ENCODE measurements at regions of chr15 and their contacts with region 1.

Region 1: GRCh38 chr15:59492389-59493377 is 54.7 kb downstream of the FAM81A start:
- DNase-seq: peak; percentile 67
- ATAC-seq: peak; percentile 80
- H3K4me3 Mint-ChIP-seq: no peak overlapping the region
- H3K27ac Mint-ChIP-seq: no peak overlapping the region
- H3K4me1 Mint-ChIP-seq: no peaks in the 10 kb centered on the region
- H3K27me3 Mint-ChIP-seq: no peaks in the 10 kb centered on the region
- CTCF ChIP-seq: peak; percentile 84

Region 2: DNA sequence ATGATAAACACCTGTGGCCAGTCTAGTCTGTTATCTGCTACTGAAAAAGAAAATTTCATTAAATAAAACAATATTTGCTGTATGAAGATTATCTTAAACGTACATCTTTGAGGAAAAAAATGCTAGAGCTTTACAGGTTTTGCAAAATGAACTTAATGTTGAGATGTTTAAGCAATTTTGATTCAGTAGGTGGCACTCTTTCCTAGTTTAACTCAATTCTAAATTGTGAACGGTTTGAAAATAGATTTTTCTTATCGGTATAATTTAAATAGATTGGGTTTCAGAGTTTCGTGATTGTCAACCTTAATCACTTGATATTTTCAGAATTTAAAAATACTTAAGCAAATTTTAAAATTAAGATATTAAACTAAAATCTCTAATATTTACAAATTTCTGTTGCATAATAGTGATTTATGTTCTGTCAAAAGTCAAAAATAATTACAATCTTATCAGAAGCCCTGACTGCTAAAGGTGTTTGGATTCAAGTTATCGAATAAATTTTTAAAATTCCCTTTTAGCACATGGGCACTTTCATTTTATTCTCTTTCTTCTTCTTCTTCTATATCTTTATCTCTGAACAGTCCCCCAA is 512.2 kb before region 1 on chr15:
- CTCF ChIA-PET with region 1: interaction called, 10 read pairs
- POLR2A ChIA-PET with region 1: no interaction called
- intact Hi-C with region 1: loop called (anchors 10 kb)
- DNase-seq: no peak
- ATAC-seq: no peak
- H3K4me3 Mint-ChIP-seq: no peak overlapping the region
- H3K27ac Mint-ChIP-seq: no peak overlapping the region
- H3K4me1 Mint-ChIP-seq: peaks cover 40% of the 10 kb centered on the region
- H3K27me3 Mint-ChIP-seq: no peaks in the 10 kb centered on the region
- CTCF ChIP-seq: peak; percentile 82

Region 3: DNA sequence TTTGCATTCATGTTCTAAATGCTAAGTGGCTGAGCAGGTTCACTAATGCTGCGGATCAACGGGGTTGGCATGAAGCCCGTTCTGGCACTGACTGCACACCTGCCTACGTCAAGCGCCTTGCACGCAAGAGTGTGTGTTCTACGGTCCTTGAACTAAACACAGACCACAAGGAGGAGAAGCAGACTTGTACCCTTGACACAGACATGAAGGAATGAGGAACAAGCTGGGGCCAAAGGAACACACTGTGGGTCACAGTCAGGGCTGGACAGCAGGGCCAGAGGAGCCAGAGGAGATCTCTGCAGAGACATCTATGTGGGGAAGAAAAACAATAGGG is 334.0 kb before region 1 on chr15:
- CTCF ChIA-PET with region 1: interaction called, 4 read pairs
- POLR2A ChIA-PET with region 1: no interaction called
- intact Hi-C with region 1: loop called (anchors 5 kb)
- DNase-seq: no peak
- ATAC-seq: no peak
- H3K4me3 Mint-ChIP-seq: no peak overlapping the region
- H3K27ac Mint-ChIP-seq: no peak overlapping the region
- H3K4me1 Mint-ChIP-seq: no peaks in the 10 kb centered on the region
- H3K27me3 Mint-ChIP-seq: no peaks in the 10 kb centered on the region
- CTCF ChIP-seq: no peak

Region 4: DNA sequence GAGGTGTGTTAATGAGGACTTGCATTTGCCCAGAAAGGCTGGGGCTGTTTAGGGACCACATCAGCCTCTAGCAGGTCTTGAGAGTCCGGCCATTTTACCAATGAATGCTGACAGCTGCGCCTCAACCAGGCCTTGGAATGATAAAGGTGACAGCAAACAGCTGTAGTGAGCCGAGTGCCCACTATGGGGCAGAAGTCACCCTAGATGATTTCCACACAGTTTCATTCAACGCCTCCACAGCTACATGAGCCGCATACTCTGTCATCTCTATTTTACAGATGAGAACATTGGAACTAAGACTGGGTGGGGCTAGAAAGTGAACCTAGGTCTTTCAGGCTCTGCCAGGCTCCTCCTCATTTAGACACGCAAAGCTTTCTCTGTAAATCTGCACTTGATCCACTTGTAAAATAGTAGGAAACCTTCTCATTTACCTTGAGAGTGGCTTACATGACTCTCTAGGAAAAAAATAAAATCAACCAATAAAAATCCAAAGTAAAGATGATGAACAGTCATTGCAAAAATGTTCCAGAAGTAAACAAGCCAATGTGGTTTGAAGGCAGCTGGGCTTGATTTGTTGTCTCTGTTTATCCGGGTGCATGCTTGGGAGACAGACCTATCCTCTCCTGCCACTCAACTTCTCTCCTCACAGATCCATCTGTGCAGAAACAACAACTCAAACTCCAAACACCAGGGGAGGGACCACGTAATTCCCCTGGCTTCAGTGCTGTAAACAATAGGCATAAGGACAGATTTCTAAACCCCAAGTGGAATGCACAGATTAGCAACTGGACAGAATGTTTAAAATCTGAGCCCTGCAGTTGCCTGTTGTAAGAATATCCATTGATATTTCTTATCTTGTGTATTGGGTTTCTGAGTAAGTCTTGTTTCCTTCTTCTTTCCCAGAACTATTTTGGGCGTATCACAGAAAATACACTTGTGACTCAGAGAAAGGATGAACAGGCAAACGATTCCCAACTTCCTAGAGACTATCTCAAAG is 317.6 kb before region 1 on chr15:
- CTCF ChIA-PET with region 1: interaction called, 9 read pairs
- POLR2A ChIA-PET with region 1: no interaction called
- intact Hi-C with region 1: loop called (anchors 5 kb)
- DNase-seq: peak; percentile 66
- ATAC-seq: peak; percentile 96
- H3K4me3 Mint-ChIP-seq: no peak overlapping the region
- H3K27ac Mint-ChIP-seq: no peak overlapping the region
- H3K4me1 Mint-ChIP-seq: no peaks in the 10 kb centered on the region
- H3K27me3 Mint-ChIP-seq: peaks cover 15% of the 10 kb centered on the region
- CTCF ChIP-seq: peak; percentile 47

Region 5: DNA sequence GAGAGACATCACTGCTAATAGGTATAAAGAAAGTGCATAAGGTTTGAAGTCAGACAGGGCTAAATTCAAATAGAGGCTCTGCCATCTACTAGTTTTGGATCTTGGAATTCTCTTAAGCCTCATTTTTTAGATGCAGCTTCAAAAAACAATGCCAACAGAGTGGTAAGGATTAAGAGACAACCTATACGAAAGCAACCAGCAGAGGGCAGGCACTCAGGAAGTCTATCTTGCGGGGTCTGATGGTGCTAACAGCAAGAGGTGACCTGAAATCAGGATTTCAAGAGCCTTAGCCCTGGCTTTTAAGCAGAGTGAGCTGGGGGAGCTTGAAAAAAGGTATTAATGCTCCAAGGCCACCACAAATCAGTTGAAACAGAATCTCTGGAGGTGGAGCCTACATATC is 245.3 kb before region 1 on chr15:
- CTCF ChIA-PET with region 1: interaction called, 29 read pairs
- POLR2A ChIA-PET with region 1: interaction called, 3 read pairs
- intact Hi-C with region 1: loop called (anchors 2 kb)
- DNase-seq: peak; percentile 79
- ATAC-seq: peak; percentile 69
- H3K4me3 Mint-ChIP-seq: no peak overlapping the region
- H3K27ac Mint-ChIP-seq: no peak overlapping the region
- H3K4me1 Mint-ChIP-seq: peaks cover 19% of the 10 kb centered on the region
- H3K27me3 Mint-ChIP-seq: peaks cover 2% of the 10 kb centered on the region
- CTCF ChIP-seq: peak; percentile 69

Region 6: GRCh38 chr15:59611276-59612260 is 118.9 kb after region 1 on chr15 and contains the start of gene GCNT3:
- CTCF ChIA-PET with region 1: no interaction called
- POLR2A ChIA-PET with region 1: no interaction called
- intact Hi-C with region 1: no loop called
- DNase-seq: no peak
- ATAC-seq: no peak
- H3K4me3 Mint-ChIP-seq: no peak within 1 kb of the TSS
- H3K27ac Mint-ChIP-seq: no peak within 1 kb of the TSS
- H3K4me1 Mint-ChIP-seq: peaks cover 5% of the 10 kb centered on the region
- H3K27me3 Mint-ChIP-seq: peaks cover 6% of the 10 kb centered on the region
- CTCF ChIP-seq: no peak
- total RNA-seq, gene GCNT3: not detected

Region 7: DNA sequence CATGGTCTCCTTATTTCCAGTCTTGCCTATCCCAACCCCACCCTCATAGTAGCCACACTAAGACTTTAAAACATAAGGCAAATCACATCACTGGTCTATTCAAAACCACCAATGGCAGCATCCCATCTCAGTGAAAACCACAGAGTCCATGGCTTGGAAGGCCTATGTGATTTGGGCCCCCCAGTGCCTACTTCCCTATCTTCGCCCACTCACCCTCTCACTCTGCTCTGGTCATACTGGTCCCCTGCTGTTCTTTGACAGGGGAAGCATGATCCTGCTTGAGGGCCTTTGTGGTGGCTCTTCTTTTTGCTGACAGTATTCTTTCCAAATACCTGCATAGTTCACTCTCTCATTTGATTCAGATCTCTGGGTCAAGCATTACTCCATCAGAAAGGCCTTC is 161.4 kb after region 1 on chr15:
- CTCF ChIA-PET with region 1: no interaction called
- POLR2A ChIA-PET with region 1: no interaction called
- intact Hi-C with region 1: no loop called
- DNase-seq: no peak
- ATAC-seq: no peak
- H3K4me3 Mint-ChIP-seq: no peak overlapping the region
- H3K27ac Mint-ChIP-seq: no peak overlapping the region
- H3K4me1 Mint-ChIP-seq: peaks cover 7% of the 10 kb centered on the region
- H3K27me3 Mint-ChIP-seq: no peaks in the 10 kb centered on the region
- CTCF ChIP-seq: no peak